ENCODE measurements at regions of chr19 and their contacts with region 1.

Region 1: DNA sequence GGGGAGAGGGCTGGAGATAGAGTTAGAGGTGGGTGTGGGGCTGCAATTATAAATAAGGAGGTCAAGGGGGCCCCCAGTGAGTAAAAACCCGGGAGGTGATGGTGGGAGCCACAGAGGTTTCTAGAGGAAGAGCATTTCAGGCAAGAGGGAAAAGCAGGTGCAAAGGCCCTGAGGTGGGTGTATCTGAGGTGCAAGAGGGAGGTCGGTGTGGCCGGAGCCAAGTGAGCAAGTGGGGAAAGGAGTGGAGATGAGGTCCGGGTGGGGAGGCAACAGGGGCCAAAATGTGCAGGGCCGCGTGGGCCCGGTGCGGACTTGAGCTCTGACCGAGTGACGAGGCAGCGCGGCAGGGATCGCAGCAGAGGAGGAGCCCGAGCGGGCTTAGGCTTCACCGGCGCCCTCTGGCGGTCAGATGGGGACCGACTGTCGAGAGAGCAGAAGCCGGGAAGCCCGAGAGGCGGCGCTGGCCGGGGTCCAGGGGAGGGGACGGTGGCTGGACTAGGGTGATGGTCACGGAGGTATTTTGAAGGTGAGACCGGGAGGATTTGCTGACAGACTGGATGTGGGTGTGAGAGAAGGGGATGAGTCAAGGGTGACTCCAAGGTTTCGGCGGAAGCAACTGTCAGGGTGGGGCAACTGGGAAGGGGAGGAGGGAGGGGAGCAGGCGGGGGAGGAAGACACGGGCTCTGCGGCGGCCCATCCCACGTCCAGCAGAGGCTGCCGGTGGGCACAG is 17.7 kb upstream of the SPACA4 start:
- DNase-seq: peak; percentile 93
- CTCF ChIP-seq: peak; percentile 95

Region 2: GRCh38 chr19:48321622-48322591 is 266.9 kb before region 1 on chr19:
- in situ Hi-C with region 1: loop called (anchors 25 kb)
- DNase-seq: peak; percentile 96
- CTCF ChIP-seq: no peak

Region 3: GRCh38 chr19:48506138-48506733 is 82.6 kb before region 1 on chr19:
- in situ Hi-C with region 1: loop called (anchors 5 kb)
- DNase-seq: peak; percentile 74
- CTCF ChIP-seq: no peak

Region 4: DNA sequence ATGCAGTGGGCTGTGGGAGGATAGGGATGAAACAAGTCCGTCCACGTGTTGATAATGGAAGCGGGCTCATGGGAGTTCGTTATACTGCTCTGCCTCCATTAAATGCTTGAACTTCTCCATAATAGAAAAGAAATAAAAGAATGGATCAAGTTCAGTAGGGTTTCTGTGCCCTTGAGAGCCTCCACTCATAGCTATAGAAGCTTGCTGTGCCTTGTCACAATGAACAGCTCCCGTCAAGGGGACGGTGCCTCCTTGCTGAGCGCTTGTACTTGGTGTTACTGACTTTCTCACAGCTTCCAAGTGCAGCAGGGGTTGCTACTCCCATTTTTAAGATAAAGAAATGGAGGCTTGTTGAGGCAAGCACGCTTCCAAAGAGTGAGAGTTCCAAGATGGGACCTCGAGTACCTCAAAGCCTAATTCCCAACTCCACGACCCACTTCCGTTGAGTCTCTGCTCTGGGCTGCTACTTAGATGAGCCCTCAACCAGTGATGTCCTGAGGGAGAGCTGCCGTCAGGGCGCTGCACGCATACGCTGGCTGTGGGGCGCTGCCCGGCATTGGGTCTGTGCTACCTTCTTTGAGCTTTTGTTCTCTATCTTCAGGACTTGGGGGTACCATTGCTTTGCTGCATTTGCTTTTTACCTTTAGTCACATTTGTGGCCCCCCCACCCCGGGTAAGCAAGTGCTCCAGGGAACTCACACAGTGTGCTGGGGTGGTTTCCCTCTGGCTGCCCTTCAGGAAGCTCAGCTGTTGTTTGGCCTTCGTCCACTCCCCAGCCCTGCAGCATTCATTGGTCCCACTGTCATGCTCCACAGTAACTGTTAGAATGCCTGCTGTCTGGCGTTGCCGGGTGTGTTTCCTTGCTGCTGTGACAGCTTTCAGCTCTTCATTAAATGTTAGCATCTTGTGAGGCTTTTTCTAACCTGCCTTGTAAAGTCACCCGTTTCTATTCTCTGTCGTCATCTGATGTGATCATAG is 506.0 kb after region 1 on chr19:
- in situ Hi-C with region 1: no loop called
- DNase-seq: no peak
- CTCF ChIP-seq: no peak